ENCODE measurements at regions of chr16 and their contacts with region 1.

Region 1: GRCh38 chr16:57447186-57447962 is at the starts of genes CIAPIN1 and COQ9:
- DNase-seq: peak; percentile 89 to 93
- ATAC-seq: peak; percentile 100
- H3K4me3 ChIP-seq: peak within 1 kb of the TSS; percentile 96
- H3K27ac ChIP-seq: peak within 1 kb of the TSS; percentile 99
- H3K4me1 ChIP-seq: peaks cover 27% of the 10 kb centered on the region
- CTCF ChIP-seq: no peak
- EP300 ChIP-seq: no peak
- POLR2A ChIP-seq: peak; percentile 83
- RAD21 ChIP-seq: 0 out of 5 replicates have a peak, but pooled peaks of 1 of the 2 experiments have one; percentile 10
- polyA plus RNA-seq, gene CIAPIN1: 101 and 114 TPM in 2 replicates
- polyA plus RNA-seq, gene COQ9: 109 and 130 TPM in 2 replicates

Region 2: DNA sequence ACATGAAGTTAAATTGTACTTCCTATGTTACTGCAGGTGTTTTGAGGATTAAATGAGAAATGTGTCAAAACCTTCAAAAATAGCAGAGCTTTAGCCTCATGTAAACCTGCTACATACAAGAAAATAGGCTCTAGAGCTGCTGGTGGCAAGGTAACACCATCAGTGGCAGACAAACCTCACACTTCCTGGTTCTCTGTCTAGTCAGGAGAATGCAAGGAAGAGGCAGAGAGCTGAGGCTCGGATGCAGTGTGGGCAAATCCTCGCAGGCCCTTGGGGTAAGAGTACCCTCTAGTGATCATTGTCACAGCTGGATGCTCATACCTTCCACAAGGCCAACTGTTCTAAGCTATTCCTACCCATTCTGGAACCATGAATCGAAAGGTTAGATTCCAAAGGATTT is 14.4 kb before region 1 on chr16:
- CTCF ChIA-PET with region 1: interaction called, 13 read pairs
- POLR2A ChIA-PET with region 1: interaction called, 5 read pairs
- DNase-seq: no peak
- ATAC-seq: no peak
- H3K4me3 ChIP-seq: no peak overlapping the region
- H3K27ac ChIP-seq: no peak overlapping the region
- H3K4me1 ChIP-seq: no peaks in the 10 kb centered on the region
- CTCF ChIP-seq: no peak
- EP300 ChIP-seq: no peak
- POLR2A ChIP-seq: no peak
- RAD21 ChIP-seq: no peak